AG04450 (cell line): ENCODE measurements at regions of chr3 and their contacts with region 1.

Region 1: GRCh38 chr3:98994128-98994762 is 92.8 kb upstream of the DCBLD2 start:
- DNase-seq: peak; percentile 49
- H3K4me3 ChIP-seq: no peak overlapping the region
- H3K27ac ChIP-seq: no peak overlapping the region
- H3K27me3 ChIP-seq: no peaks in the 10 kb centered on the region
- CTCF ChIP-seq: peak; percentile 77

Region 2: DNA sequence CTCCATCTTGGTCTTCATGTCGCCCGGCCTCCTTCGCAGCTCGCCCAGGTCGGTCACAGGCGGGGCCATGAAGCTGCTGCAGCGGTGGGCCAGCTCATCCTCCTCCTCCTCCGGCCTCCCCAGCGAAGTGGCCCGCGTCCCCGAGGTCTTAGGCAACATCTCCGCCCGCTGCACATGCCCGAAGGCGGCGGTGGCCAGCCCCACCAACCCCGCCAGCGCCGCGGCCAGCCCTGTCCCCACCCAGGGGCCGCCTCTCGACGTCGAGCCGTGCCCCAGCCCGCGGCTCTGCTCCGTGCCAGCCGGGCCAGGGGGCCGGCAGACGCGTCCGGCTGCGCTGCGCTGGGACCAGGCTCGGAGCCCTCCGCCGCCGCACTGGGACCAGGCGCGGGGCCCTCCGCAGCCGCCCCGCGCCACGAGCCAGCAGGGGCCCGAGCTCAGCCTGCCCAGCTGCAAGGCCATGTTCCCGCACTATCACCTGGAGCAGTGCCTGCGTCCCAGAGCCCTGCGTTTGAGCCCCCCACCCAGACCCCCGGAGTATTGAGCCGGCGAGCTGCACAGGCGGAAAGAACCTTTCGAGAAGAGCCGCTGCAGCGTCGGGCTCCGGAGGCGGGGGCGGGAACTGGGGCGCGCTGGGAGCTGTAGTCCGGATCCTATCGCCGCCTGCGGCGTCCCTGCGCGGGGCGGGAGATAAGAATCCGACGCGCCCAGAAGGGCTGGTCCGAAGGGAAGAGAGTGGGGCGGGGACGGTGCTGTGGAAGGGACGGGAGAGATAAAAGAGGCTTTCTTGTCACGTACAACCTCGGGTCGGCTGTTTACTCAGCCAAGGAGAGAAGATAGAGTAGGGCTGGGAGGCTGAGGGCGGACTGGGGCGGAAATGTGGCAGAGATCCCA is 401.0 kb before region 1 on chr3 and contains the start of gene CPOX:
- CTCF ChIA-PET with region 1: interaction called, 36 read pairs
- POLR2A ChIA-PET with region 1: no interaction called
- DNase-seq: peak; percentile 60
- H3K4me3 ChIP-seq: peak within 1 kb of the TSS; percentile 81
- H3K27ac ChIP-seq: peak within 1 kb of the TSS; percentile 47
- H3K27me3 ChIP-seq: no peaks in the 10 kb centered on the region
- CTCF ChIP-seq: no peak
- polyA plus RNA-seq, gene CPOX: 15.7 and 19.6 TPM in 2 replicates

Region 3: DNA sequence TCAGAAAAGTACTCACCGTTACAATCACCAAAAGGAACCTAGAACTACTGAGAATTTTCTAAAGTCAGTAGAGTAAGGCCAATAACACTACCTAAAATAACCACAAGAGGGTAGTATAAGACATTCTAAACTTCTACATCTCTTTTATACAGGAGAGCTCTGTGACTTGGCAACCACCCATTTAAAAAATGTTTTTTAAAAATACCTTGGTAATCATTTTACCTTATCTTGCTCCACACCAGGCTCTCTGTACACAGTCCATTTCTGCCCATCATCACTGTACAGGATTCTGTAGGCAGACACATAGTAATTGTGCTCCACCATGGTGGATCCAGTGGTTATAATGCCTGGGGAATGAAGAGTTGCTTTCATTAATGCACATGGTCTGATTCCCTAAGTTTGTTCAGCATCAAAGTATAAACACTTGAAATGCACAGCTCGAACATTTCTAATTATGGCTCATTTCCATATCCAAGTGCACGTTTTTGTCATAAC is 176.7 kb before region 1 on chr3:
- CTCF ChIA-PET with region 1: interaction called, 359 read pairs
- POLR2A ChIA-PET with region 1: interaction called, 5 read pairs
- DNase-seq: peak; percentile 21
- H3K4me3 ChIP-seq: no peak overlapping the region
- H3K27ac ChIP-seq: no peak overlapping the region
- H3K27me3 ChIP-seq: no peaks in the 10 kb centered on the region
- CTCF ChIP-seq: peak; percentile 59

Region 4: GRCh38 chr3:98855806-98856400 is 138.3 kb before region 1 on chr3:
- CTCF ChIA-PET with region 1: interaction called, 12 read pairs
- POLR2A ChIA-PET with region 1: no interaction called
- DNase-seq: peak; percentile 58
- H3K4me3 ChIP-seq: no peak overlapping the region
- H3K27ac ChIP-seq: no peak overlapping the region
- H3K27me3 ChIP-seq: no peaks in the 10 kb centered on the region
- CTCF ChIP-seq: no peak

Region 5: GRCh38 chr3:98901392-98902350 is 92.6 kb before region 1 on chr3 and contains the start of gene DCBLD2:
- CTCF ChIA-PET with region 1: interaction called, 16 read pairs
- POLR2A ChIA-PET with region 1: interaction called, 8 read pairs
- DNase-seq: peak; percentile 99
- H3K4me3 ChIP-seq: peak within 1 kb of the TSS; percentile 89
- H3K27ac ChIP-seq: peak within 1 kb of the TSS; percentile 86
- H3K27me3 ChIP-seq: no peaks in the 10 kb centered on the region
- CTCF ChIP-seq: no peak
- polyA plus RNA-seq, gene DCBLD2: 158 and 202 TPM in 2 replicates

Region 6: DNA sequence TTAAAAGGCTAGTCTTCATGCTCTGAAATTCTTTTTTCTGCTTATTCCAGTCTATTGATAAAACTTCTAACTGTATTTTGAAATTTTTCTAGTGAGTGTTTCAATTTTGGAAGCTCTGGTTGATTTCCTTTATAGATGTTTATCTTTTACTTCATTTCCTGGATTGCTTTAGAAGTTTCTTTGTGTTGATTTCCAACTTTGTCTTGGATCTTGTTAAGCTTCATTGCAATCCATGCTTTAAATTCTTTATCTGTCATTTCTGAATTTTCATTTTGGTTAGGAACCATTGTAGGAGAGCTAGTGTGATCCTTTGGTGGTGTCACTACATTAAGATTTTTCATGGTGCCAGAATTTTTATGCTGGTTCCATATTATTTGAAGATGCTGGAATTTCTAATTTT is 12.4 kb after region 1 on chr3:
- CTCF ChIA-PET with region 1: interaction called, 10 read pairs
- POLR2A ChIA-PET with region 1: no interaction called
- DNase-seq: no peak
- H3K4me3 ChIP-seq: no peak overlapping the region
- H3K27ac ChIP-seq: no peak overlapping the region
- H3K27me3 ChIP-seq: no peaks in the 10 kb centered on the region
- CTCF ChIP-seq: no peak

Region 7: GRCh38 chr3:99753268-99753975 is 759.2 kb after region 1 on chr3:
- CTCF ChIA-PET with region 1: interaction called, 12 read pairs
- POLR2A ChIA-PET with region 1: no interaction called
- DNase-seq: peak; percentile 63
- H3K4me3 ChIP-seq: no peak overlapping the region
- H3K27ac ChIP-seq: no peak overlapping the region
- H3K27me3 ChIP-seq: no peaks in the 10 kb centered on the region
- CTCF ChIP-seq: peak; percentile 84

Region 8: GRCh38 chr3:100537622-100538338 is 1543.5 kb after region 1 on chr3:
- CTCF ChIA-PET with region 1: no interaction called
- POLR2A ChIA-PET with region 1: no interaction called
- DNase-seq: no peak
- H3K4me3 ChIP-seq: no peak overlapping the region
- H3K27ac ChIP-seq: no peak overlapping the region
- H3K27me3 ChIP-seq: no peaks in the 10 kb centered on the region
- CTCF ChIP-seq: no peak